ENCODE measurements at regions of chr2 and their contacts with region 1.

Region 1: GRCh38 chr2:129849559-129850160 is 129.8 kb upstream of the RAB6C start:
- DNase-seq: no peak
- H3K4me3 ChIP-seq: no peak overlapping the region
- H3K27ac ChIP-seq: no peak overlapping the region
- H3K4me1 ChIP-seq: no peaks in the 10 kb centered on the region
- H3K27me3 ChIP-seq: no peaks in the 10 kb centered on the region
- CTCF ChIP-seq: peak in 2 of 3 donors; percentile 60 to 67
- POLR2A ChIP-seq: no peak

Region 2: DNA sequence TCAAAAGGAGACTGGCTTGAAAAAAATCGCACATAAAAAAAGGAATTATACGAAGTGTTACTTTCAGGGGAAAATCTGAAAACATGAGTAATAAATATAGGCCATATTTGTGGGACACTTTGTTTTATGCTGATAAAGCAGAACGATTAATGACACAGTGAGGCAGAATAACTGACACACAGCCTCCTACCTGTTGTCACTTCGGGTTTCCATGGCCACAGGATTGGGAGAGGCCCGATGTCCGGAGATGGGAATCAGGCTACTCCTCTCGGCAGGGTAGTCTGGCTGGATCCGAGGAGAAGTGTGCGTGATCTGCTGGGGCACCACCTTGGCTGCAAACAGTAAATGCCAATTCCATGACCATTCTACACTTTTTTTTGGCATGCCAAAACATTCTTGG is 1853.5 kb before region 1 on chr2:
- intact Hi-C with region 1: loop called (anchors 10 kb)
- DNase-seq: no peak
- H3K4me3 ChIP-seq: no peak overlapping the region
- H3K27ac ChIP-seq: no peak overlapping the region
- H3K4me1 ChIP-seq: no peaks in the 10 kb centered on the region
- H3K27me3 ChIP-seq: no peaks in the 10 kb centered on the region
- CTCF ChIP-seq: no peak
- POLR2A ChIP-seq: no peak